Sigmoid colon (tissue), 7 donors: ENCODE measurements at regions of chr5 and their contacts with region 1.

Region 1: GRCh38 chr5:6765612-6766525 is 52.6 kb downstream of the TENT4A start:
- DNase-seq: peak; percentile 77
- H3K4me3 ChIP-seq: no peak overlapping the region
- H3K27ac ChIP-seq: peak overlapping the region; percentile 36 to 62 (median 58)
- H3K4me1 ChIP-seq: peaks cover 0 to 16% (median 14%) of the 10 kb centered on the region in 4 donors
- H3K27me3 ChIP-seq: no peaks in the 10 kb centered on the region
- CTCF ChIP-seq: peak in 3 of 4 experiments; percentile 44 to 77 (median 58)
- EP300 ChIP-seq: no peak
- POLR2A ChIP-seq: no peak

Region 2: DNA sequence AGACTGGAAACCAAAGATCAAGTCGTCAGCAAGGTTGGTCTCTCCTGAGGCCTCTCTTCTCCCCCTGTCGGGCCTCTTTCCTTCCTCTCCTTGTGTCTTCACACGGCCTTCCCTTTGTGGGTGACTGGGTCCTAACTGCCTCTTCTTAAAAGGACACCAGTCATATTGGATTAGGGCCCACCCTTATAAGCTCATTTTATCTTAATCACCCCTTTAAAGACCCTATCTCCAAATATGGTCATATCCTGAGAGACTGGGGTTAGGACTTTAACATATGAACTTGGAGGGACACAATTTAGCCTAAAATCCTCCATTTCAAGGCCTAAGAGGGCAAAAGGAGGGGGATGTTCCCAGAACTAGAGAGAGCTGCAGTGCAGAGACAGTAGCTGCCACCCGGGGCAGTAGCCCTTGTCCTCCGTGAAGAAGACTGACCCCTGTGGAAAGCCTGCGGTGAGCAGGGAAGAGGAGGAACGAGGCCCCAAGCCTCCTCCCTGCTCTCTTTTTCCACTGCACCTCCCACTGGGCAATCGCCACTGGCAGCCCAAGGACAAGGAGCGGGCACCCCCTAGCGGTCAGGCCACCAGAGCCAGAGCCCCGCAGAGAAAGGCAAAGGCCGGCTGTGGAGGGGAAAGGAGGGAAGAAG is 1050.1 kb after region 1 on chr5:
- intact Hi-C with region 1: loop called (anchors 10 kb)
- DNase-seq: peak; percentile 88
- H3K4me3 ChIP-seq: no peak overlapping the region
- H3K27ac ChIP-seq: no peak overlapping the region
- H3K4me1 ChIP-seq: peaks cover 0 to 10% (median 7%) of the 10 kb centered on the region in 4 donors
- H3K27me3 ChIP-seq: no peaks in the 10 kb centered on the region
- CTCF ChIP-seq: peak; percentile 17 to 77 (median 65)
- EP300 ChIP-seq: no peak
- POLR2A ChIP-seq: no peak